A549 (cell line): ENCODE measurements at regions of chr5 and their contacts with region 1.

Region 1: DNA sequence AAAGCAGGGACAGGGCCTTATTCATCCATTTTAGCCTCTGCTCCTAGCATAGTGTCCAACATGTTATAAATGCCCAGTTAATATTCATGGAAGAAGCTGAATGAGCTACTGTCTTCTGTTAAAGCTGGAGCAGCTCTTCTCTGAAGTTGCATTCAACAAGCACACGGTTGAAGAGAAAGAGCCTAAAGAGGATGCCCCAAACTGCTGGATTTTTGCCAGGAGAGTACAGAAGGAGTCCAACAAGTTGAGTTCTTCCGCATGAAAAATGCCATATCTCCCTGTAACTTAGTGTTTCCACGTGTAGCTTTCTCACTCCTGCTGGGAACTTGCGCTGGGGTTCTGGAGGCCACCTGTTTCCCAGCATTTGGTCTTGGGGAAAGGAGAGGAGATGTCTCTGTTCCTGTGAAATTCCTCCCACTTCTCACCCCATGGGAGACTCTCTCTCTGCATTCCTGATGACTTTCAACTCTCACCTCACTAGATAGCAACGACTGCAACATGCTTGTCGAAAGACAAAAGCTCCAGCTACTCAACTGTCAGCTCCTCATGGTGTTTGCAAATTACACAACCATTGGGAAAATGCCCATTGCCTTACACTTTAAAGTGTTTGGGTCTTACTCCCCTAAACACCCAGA is 122.8 kb downstream of the KIF4B start:
- DNase-seq: no peak
- ATAC-seq: no peak
- H3K4me3 ChIP-seq: no peak overlapping the region
- H3K27ac ChIP-seq: no peak overlapping the region
- H3K4me1 ChIP-seq: no peaks in the 10 kb centered on the region
- CTCF ChIP-seq: no peak
- EP300 ChIP-seq: no peak
- POLR2A ChIP-seq: no peak
- RAD21 ChIP-seq: no peak

Region 2: DNA sequence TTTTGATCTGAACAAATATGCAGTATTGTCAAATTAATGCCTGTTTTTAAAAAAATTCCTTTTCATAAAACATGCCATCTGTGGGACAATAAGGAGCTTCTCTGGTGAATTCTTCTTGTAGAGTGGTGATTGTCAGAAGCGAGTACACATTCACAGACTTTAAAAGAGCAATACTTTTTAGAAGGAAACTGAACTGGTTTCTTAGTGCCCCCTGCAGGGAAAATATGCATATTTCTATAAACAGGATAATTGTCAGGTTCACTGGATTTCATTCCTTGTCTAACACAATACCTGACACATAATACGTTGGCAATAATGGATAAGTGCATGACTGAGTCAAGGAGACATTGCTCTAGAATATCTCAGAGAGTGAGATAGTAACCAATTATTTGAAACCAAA is 10.9 kb after region 1 on chr5:
- CTCF ChIA-PET with region 1: interaction called, 15 read pairs
- POLR2A ChIA-PET with region 1: no interaction called
- DNase-seq: no peak
- ATAC-seq: 0 out of 6 replicates have a peak, but pooled peaks of 1 of the 2 experiments have one; percentile 30
- H3K4me3 ChIP-seq: no peak overlapping the region
- H3K27ac ChIP-seq: no peak overlapping the region
- H3K4me1 ChIP-seq: no peaks in the 10 kb centered on the region
- CTCF ChIP-seq: peak; percentile 44
- EP300 ChIP-seq: no peak
- POLR2A ChIP-seq: no peak
- RAD21 ChIP-seq: peak; percentile 49 to 51